Esophagus squamous epithelium (tissue), 5 donors: ENCODE measurements at regions of chr6 and their contacts with region 1.

Region 1: GRCh38 chr6:139381216-139381865 is 6.9 kb upstream of the CITED2 start:
- DNase-seq: no peak
- H3K4me3 ChIP-seq: no peak overlapping the region
- H3K27ac ChIP-seq: no peak overlapping the region
- H3K4me1 ChIP-seq: peaks cover 3 to 11% (median 4%) of the 10 kb centered on the region in 3 donors
- H3K27me3 ChIP-seq: no peaks in the 10 kb centered on the region
- CTCF ChIP-seq: no peak
- POLR2A ChIP-seq: no peak

Region 2: DNA sequence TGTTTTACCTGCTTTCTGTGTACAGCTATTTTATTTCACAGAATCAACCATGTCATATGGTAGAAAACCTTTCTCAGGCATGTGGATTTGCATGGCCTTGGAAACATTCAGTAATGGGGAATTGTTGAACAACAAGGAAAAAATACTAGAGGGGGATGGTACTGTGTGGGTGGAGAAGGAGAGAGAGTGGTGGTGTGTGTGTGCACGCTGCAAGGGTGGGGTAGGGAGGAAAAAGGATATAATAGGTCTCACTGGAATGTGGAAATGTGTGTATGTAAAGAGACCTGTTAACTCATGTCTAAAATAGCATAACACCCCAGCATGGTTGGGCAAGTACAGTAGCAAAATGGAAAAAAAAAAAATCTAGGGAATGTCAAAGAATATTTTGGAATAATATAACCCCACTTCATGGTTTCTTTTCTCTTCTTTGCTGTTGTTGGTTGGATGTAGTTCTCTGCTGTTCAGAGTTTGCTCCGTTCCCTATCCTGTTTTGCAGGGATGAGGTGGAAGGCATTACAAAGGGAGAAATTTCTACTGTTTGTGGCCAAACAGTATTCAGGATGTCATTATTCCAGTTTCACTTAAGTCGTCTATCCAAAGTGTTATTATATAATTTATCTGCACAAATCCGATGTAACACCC is 87.0 kb after region 1 on chr6:
- intact Hi-C with region 1: loop called (anchors 10 kb)
- DNase-seq: no peak
- H3K4me3 ChIP-seq: no peak overlapping the region
- H3K27ac ChIP-seq: peak overlapping the region in 3 of 4 donors; percentile 14 to 26 (median 19)
- H3K4me1 ChIP-seq: peaks cover 5 to 22% (median 12%) of the 10 kb centered on the region in 3 donors
- H3K27me3 ChIP-seq: no peaks in the 10 kb centered on the region
- CTCF ChIP-seq: no peak
- POLR2A ChIP-seq: no peak